ENCODE measurements at regions of chr10 and their contacts with region 1.

Region 1: DNA sequence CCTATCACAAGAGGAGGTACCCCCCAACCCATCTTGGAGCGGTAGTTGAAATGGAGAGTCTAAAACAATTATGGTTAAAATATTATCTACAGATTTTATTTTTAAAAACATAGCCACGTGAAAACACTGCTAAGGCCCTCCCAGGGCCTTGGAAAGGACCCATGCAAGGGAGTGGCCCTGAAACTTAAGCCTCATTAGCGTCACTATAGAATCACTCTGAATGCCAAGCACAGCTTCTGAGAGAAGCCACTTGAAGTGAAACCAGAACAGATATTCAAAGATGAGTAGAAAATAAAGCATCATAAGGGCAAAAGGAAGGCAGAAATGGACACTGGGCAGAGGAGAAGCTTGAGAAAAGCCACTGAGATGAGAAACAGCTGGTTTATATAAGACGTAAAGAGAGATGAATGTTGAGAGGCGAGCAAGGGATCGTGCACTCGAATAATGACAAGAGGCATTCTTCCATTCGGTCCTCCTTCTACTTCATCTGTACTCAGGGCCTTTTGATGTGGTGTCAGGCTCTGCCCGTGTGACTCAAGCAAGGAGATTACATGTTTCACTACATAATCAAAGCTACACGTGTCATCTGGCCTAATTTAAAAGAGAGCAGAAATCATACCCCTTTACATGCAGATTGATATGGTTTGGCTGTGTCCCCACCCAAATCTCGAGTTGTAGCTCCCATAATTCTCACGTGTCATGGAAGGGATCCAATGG is 33.4 kb upstream of the SLC39A12 start:
- DNase-seq: no peak
- ATAC-seq: peak in 1 of 4 donors; percentile 54
- H3K4me3 ChIP-seq: no peak overlapping the region
- H3K27ac ChIP-seq: peak overlapping the region in 1 of 12 donors; percentile 37
- H3K4me1 ChIP-seq: peaks cover 0 to 36% (median under 1%) of the 10 kb centered on the region in 12 donors
- H3K27me3 ChIP-seq: no peaks in the 10 kb centered on the region
- CTCF ChIP-seq: no peak
- POLR2A ChIP-seq: no peak

Region 2: DNA sequence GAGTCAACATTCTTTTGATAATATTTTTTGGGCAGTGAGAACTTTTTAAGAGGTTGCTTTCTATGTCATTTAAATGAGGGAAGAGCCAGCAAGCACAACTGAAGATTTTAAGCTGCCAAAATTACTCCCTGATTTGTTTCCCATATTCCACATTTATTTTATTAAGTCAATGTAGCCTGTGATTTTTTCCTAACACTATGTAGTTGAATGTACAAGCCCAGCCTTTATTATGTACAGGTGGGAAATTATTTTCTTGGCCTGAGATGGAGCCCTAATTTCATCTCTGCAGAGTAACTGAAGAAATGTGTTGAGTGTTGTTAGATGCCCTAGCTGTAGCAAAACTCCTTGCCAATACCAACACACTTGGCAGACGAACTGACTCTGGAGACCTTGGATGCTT is 1974.9 kb before region 1 on chr10:
- intact Hi-C with region 1: loop called in 1 of 10 experiments (anchors 5 kb)
- DNase-seq: no peak
- ATAC-seq: no peak
- H3K4me3 ChIP-seq: no peak overlapping the region
- H3K27ac ChIP-seq: no peak overlapping the region
- H3K4me1 ChIP-seq: no peaks in the 10 kb centered on the region
- H3K27me3 ChIP-seq: peaks cover 0 to 7% (median 0%) of the 10 kb centered on the region in 9 donors
- CTCF ChIP-seq: no peak
- POLR2A ChIP-seq: no peak

Region 3: GRCh38 chr10:17655567-17656146 is 262.7 kb before region 1 on chr10:
- intact Hi-C with region 1: no loop called
- DNase-seq: no peak
- ATAC-seq: no peak
- H3K4me3 ChIP-seq: no peak overlapping the region
- H3K27ac ChIP-seq: no peak overlapping the region
- H3K4me1 ChIP-seq: peaks cover 0 to 38% (median 14%) of the 10 kb centered on the region in 12 donors
- H3K27me3 ChIP-seq: no peaks in the 10 kb centered on the region
- CTCF ChIP-seq: no peak
- POLR2A ChIP-seq: no peak

Region 4: GRCh38 chr10:18157881-18158280 is 239.5 kb after region 1 on chr10:
- intact Hi-C with region 1: no loop called
- DNase-seq: no peak
- ATAC-seq: no peak
- H3K4me3 ChIP-seq: no peak overlapping the region
- H3K27ac ChIP-seq: peak overlapping the region in 1 of 12 donors; percentile 61
- H3K4me1 ChIP-seq: peaks cover 0 to 10% (median 0%) of the 10 kb centered on the region in 12 donors
- H3K27me3 ChIP-seq: no peaks in the 10 kb centered on the region
- CTCF ChIP-seq: no peak
- POLR2A ChIP-seq: no peak